ENCODE measurements at regions of chr6 and their contacts with region 1.

Region 1: DNA sequence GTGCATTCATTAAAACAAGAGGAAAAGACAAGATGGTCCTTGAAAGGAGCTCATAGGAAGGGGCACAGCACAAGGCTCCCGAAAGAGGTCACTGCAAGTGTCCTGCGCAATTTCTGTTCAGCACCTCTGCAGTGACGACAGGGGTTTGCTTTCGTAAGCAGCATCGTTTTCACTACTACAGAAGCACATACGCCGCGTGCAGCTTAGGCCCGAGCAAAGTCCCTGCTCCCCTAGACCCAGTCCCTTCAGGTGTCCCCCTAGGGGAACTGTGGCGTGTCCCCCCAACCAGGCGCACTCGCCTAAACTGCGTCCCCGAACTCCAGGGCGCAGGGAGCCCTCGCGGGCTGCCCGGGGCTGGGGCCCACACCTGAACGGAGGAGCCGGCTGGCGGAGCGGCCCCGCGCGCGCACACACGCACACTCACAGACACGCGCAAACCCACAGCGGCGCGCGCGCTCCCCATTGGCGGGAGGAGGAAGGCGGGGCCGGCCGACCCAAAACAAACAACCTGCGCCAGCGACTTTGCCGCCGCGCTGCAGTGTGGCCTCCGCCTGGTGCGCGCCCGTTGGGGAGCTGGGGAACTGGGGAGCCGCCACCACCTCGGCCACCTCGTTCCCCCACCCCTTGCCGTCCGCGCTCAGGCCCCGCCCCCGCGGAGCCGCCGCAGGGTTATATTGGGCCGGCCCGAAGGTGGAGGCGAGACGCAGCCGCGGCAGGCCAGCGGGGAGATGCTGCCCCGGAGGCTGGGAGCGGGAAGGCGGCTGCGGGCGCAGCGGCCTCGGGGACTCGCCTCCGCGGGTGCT is at the start of gene FOXQ1:
- DNase-seq: no peak
- H3K4me3 Mint-ChIP-seq: peak within 1 kb of the TSS; percentile 67
- H3K27ac Mint-ChIP-seq: peak within 1 kb of the TSS; percentile 42
- H3K4me1 Mint-ChIP-seq: peaks cover 9% of the 10 kb centered on the region
- H3K27me3 Mint-ChIP-seq: peaks cover 73% of the 10 kb centered on the region
- total RNA-seq, gene FOXQ1: not detected in 2 replicates

Region 2: DNA sequence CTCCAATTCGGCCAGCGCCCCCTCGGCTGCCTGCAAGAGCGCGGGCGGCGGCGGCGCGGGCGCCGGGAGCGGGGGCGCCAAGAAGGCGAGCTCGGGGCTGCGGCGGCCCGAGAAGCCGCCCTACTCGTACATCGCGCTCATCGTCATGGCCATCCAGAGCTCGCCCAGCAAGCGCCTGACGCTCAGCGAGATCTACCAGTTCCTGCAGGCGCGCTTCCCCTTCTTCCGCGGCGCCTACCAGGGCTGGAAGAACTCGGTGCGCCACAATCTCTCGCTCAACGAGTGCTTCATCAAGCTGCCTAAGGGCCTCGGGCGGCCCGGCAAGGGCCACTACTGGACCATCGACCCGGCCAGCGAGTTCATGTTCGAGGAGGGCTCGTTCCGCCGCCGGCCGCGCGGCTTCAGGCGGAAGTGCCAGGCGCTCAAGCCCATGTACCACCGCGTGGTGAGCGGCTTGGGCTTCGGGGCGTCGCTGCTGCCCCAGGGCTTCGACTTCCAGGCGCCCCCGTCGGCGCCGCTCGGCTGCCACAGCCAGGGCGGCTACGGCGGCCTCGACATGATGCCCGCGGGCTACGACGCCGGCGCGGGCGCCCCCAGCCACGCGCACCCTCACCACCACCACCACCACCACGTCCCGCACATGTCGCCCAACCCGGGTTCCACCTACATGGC is 78.7 kb after region 1 on chr6:
- intact Hi-C with region 1: loop called (anchors 2 kb)
- DNase-seq: no peak
- H3K4me3 Mint-ChIP-seq: peak overlapping the region; percentile 39
- H3K27ac Mint-ChIP-seq: no peak overlapping the region
- H3K4me1 Mint-ChIP-seq: peaks cover 15% of the 10 kb centered on the region
- H3K27me3 Mint-ChIP-seq: peaks cover 76% of the 10 kb centered on the region

Measured in activated T-helper 2 cell treated with anti-CD3 and anti-CD28 coated beads, Interferon-gamma antibody, Interleukin-2, Interleukin-4, amounts not matched to agents 10 μg/mL and 5 μg/mL and 100 μg/mL, durations not matched to agents 14 hours and 24 hours and 36 hours (primary cell).